ENCODE measurements at regions of chr17 and their contacts with region 1.

Region 1: GRCh38 chr17:57084802-57085447 is at the start of gene AKAP1:
- DNase-seq: peak; percentile 87 to 97
- H3K4me3 ChIP-seq: peak within 1 kb of the TSS; percentile 82 to 98
- H3K27ac ChIP-seq: peak within 1 kb of the TSS; percentile 98
- H3K4me1 ChIP-seq: peaks cover 3 to 28% of the 10 kb centered on the region in 2 donors
- H3K27me3 ChIP-seq: no peaks in the 10 kb centered on the region
- CTCF ChIP-seq: peak; percentile 7 to 19 (median 18)
- total RNA-seq, gene AKAP1: 127 TPM

Region 2: DNA sequence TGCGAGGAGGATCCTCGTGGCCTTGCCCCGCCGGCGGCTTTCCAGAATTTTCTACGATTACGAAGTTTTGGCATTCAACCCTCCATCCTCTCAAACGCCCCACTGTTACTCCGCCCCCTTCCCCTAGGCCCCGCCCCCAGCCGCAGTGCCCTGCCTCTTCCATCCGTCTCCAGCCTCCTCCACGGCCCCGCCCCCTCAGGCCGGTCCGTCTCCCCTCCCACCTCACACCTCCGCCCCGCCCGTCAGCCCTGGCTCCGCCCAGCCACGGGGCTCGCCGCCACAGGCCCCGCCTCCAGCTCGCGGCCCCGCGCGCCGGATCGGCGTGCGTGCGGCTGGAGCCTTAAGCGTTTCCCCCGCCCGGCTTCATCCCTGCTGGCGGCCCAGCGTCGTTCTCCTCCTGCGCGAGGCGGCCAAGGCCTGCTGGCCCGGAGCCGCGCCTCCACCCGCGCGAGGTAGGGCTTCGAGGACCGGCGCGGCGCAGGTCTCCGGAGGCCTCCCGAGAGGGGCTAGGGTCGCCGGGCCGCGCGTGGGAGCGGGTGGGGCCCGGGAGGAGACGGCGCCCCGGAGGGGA is 251.0 kb before region 1 on chr17 and contains the starts of genes C17orf67 and DGKE:
- intact Hi-C with region 1: loop called (anchors 10 kb)
- DNase-seq: peak; percentile 93 to 98
- H3K4me3 ChIP-seq: peak within 1 kb of the TSS; percentile 71 to 91
- H3K27ac ChIP-seq: peak within 1 kb of the TSS; percentile 80 to 82
- H3K4me1 ChIP-seq: peaks cover 0 to 16% of the 10 kb centered on the region in 2 donors
- H3K27me3 ChIP-seq: no peaks in the 10 kb centered on the region
- CTCF ChIP-seq: no peak
- total RNA-seq, gene C17orf67: 10.1 TPM
- total RNA-seq, gene DGKE: 85.0 TPM

Region 3: DNA sequence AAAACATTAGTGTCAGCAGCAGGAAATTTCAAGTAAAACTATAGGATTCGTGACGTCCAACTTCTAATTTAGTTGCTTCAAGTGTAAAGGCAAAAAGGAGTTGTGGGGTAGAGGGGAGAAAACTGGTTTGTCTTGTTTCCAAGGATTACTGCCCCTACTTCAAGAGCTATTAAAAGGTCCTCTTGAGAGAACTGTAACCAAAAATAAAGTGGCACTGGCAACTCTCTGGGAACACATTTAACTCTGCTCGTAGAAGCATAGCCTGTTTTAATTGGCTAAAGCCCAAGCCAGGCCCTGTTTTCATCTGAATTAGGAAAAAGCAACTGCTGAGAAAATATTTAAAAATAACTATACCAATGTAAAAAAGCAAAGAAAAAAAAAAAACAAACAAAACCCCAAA is 51.6 kb before region 1 on chr17:
- intact Hi-C with region 1: loop called (anchors 1 kb)
- DNase-seq: peak in 1 of 2 donors; percentile 86
- H3K4me3 ChIP-seq: no peak overlapping the region
- H3K27ac ChIP-seq: peak overlapping the region; percentile 85 to 92
- H3K4me1 ChIP-seq: peaks cover 8 to 43% of the 10 kb centered on the region in 2 donors
- H3K27me3 ChIP-seq: no peaks in the 10 kb centered on the region
- CTCF ChIP-seq: no peak

Region 4: GRCh38 chr17:57045868-57046704 is 38.8 kb before region 1 on chr17:
- intact Hi-C with region 1: loop called (anchors 2 kb)
- DNase-seq: peak in 1 of 2 donors; percentile 65
- H3K4me3 ChIP-seq: peak overlapping the region; percentile 50 to 62
- H3K27ac ChIP-seq: peak overlapping the region; percentile 42 to 61
- H3K4me1 ChIP-seq: peaks cover 0 to 6% of the 10 kb centered on the region in 2 donors
- H3K27me3 ChIP-seq: peaks cover 3% of the 10 kb centered on the region
- CTCF ChIP-seq: no peak

Region 5: DNA sequence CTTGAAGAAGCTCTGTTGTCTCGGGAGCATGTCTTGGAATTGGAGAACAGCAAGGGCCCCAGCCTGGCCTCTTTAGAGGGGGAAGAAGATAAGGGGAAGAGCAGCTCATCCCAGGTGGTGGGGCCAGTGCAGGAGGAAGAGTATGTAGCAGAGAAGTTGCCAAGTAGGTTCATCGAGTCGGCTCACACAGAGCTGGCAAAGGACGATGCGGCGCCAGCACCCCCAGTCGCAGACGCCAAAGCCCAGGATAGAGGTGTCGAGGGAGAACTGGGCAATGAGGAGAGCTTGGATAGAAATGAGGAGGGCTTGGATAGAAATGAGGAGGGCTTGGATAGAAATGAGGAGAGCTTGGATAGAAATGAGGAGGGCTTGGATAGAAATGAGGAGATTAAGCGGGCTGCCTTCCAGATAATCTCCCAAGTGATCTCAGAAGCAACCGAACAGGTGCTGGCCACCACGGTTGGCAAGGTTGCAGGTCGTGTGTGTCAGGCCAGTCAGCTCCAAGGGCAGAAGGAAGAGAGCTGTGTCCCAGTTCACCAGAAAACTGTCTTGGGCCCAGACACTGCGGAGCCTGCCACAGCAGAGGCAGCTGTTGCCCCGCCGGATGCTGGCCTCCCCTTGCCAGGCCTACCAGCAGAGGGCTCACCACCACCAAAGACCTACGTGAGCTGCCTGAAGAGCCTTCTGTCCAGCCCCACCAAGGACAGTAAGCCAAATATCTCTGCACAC is 21.3 kb after region 1 on chr17:
- intact Hi-C with region 1: loop called (anchors 1 kb)
- DNase-seq: no peak
- H3K4me3 ChIP-seq: no peak overlapping the region
- H3K27ac ChIP-seq: peak overlapping the region; percentile 90 to 91
- H3K4me1 ChIP-seq: peaks cover 21 to 47% of the 10 kb centered on the region in 2 donors
- H3K27me3 ChIP-seq: no peaks in the 10 kb centered on the region
- CTCF ChIP-seq: peak in 2 of 3 experiments; percentile 23 to 25

Region 6: GRCh38 chr17:57294629-57295535 is 210.0 kb after region 1 on chr17:
- intact Hi-C with region 1: no loop called
- DNase-seq: no peak
- H3K4me3 ChIP-seq: no peak overlapping the region
- H3K27ac ChIP-seq: no peak overlapping the region
- H3K4me1 ChIP-seq: peaks cover 0 to 3% of the 10 kb centered on the region in 2 donors
- H3K27me3 ChIP-seq: no peaks in the 10 kb centered on the region
- CTCF ChIP-seq: no peak

Region 7: DNA sequence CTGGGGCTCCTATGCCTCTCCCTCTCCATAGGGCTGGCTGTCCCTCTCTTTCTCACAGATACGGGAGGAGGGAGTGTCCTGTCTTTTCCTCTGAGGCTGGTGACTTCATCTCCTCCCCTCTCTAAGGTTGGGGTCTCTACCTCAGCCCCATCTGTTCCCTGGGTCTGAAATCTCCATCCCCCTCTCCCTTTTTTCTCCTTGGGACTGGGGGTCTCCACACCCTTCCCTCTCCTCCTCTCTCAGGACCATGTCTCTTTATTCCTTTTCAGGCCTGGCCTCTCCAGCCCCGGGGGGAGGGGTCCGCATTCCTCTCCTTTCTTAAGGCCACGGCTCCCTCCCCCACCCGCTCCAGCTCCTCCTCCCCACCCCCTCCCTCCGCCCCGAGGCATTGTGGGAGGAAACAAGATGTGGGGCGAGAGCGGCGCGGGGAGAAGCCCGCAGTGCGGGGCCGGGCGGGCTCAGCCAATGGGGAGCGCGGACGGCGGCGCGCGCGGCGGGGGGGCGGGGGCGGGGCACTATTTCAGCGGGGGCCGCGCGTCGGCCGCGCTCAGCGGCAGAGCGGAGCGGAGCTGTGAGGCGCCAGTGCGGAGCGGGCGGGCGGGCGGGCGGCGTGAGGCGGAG is 998.1 kb after region 1 on chr17 and contains the start of gene DYNLL2:
- intact Hi-C with region 1: loop called (anchors 10 kb)
- DNase-seq: peak; percentile 65 to 96
- H3K4me3 ChIP-seq: peak within 1 kb of the TSS; percentile 66 to 76
- H3K27ac ChIP-seq: peak within 1 kb of the TSS; percentile 90 to 92
- H3K4me1 ChIP-seq: peaks cover 6 to 27% of the 10 kb centered on the region in 2 donors
- H3K27me3 ChIP-seq: no peaks in the 10 kb centered on the region
- CTCF ChIP-seq: no peak
- total RNA-seq, gene DYNLL2: 15.3 TPM

Measured in ascending aorta (tissue), 2 donors.